A549 (cell line): ENCODE measurements at regions of chr14 and their contacts with region 1.

Region 1: GRCh38 chr14:49867831-49868723 is 15.5 kb upstream of the NEMF start:
- DNase-seq: peak; percentile 90 to 98
- ATAC-seq: peak; percentile 95
- H3K4me3 ChIP-seq: peak overlapping the region; percentile 54
- H3K27ac ChIP-seq: peak overlapping the region; percentile 82 to 93
- H3K4me1 ChIP-seq: peaks cover 25% of the 10 kb centered on the region
- CTCF ChIP-seq: no peak
- EP300 ChIP-seq: no peak
- POLR2A ChIP-seq: peak; percentile 67
- RAD21 ChIP-seq: no peak; a peak in 3 of 5 replicates

Region 2: DNA sequence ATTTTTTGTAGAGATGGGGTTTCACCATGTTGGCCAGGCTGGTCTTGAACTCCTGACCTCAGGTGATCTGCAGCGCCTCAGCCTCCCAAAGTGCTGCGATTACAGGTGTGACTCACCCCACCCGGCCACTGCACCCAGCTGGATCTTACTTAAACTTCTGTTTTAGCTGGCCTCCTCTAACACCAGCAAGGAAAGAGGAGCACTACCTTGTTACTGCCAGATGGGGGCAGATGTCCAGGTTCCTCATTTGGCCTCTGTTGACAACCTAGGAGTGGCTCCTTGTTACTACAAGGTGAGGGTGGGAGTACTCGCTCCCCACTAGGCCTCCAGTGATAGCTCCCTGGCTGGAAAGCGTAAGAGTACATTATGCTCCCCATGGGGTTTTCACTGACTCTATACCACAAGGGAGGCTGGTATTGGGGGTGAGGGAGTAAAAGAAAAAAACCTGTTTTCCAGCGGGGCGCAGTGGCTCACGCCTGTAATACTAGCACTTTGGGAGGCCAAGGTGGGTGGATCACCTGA is 11.7 kb after region 1 on chr14:
- CTCF ChIA-PET with region 1: interaction called, 28 read pairs
- POLR2A ChIA-PET with region 1: interaction called, 4 read pairs
- DNase-seq: peak; percentile 59 to 89
- ATAC-seq: peak; percentile 89 to 95
- H3K4me3 ChIP-seq: no peak overlapping the region
- H3K27ac ChIP-seq: peak overlapping the region; percentile 3 to 38; a peak in 2 of 6 replicates
- H3K4me1 ChIP-seq: 0 out of 3 replicates have a peak, but pooled peaks cover 3% of the 10 kb centered on the region
- CTCF ChIP-seq: peak; percentile 53; the same call in 2 of the 3 replicates
- EP300 ChIP-seq: no peak
- POLR2A ChIP-seq: no peak
- RAD21 ChIP-seq: peak; percentile 53 to 72

Region 3: GRCh38 chr14:49954171-49954631 is 86.1 kb after region 1 on chr14:
- CTCF ChIA-PET with region 1: interaction called, 5 read pairs
- POLR2A ChIA-PET with region 1: interaction called, 10 read pairs
- DNase-seq: peak in 1 of 2 experiments; percentile 40
- ATAC-seq: peak in 1 of 2 experiments; percentile 43; a peak in 2 of 6 replicates
- H3K4me3 ChIP-seq: no peak overlapping the region
- H3K27ac ChIP-seq: peak overlapping the region in 1 of 2 experiments; percentile 55; a peak in 2 of 6 replicates
- H3K4me1 ChIP-seq: peaks cover 58% of the 10 kb centered on the region
- CTCF ChIP-seq: no peak
- EP300 ChIP-seq: no peak
- POLR2A ChIP-seq: no peak
- RAD21 ChIP-seq: no peak

Region 4: GRCh38 chr14:50060871-50061663 is 193.0 kb after region 1 on chr14:
- CTCF ChIA-PET with region 1: interaction called, 29 read pairs
- POLR2A ChIA-PET with region 1: interaction called, 12 read pairs
- DNase-seq: peak; percentile 86 to 89
- ATAC-seq: peak; percentile 88 to 89
- H3K4me3 ChIP-seq: no peak overlapping the region
- H3K27ac ChIP-seq: peak overlapping the region; percentile 90 to 95
- H3K4me1 ChIP-seq: peaks cover 39% of the 10 kb centered on the region
- CTCF ChIP-seq: no peak
- EP300 ChIP-seq: peak in 1 of 2 experiments; percentile 28; a peak in 1 of 5 replicates
- POLR2A ChIP-seq: no peak
- RAD21 ChIP-seq: peak; percentile 8 to 48; a peak in 4 of 5 replicates

Region 5: DNA sequence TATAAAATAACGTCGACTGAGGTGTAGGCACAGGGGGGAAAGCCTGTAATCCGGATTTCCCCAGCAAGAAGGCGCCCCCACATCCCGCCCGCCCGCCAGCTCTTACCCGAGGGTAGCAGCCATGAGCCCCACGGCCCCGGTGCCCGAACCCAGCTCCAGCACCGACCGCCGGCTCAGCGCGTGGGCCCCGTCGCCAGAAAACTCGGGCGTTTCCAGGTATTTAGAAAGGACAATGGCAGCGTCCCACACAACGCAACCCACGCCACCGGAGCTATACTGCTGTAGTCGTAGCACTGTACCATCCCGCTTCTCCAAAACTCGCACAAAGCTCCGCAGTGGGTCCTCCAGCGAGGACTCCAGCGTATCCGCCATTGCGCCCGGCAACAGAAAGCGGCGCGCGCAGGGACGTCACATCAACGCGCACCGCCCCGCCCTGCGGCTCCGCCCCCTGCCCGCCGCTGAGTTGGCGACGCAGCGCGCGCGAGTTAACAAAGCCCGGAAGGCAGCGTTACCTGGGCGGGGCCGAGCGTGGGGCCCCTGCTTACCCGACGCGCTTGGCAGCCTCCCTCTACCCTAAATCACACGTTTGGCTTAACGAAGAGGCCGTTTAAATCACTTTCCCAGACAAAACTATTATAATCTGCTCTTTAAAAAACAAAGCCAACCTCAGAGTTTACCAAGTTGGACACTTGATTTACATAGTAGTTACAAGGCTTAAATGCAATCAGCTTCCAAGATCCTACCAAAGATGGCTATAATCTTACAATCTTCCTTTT is 248.3 kb after region 1 on chr14 and contains the start of gene VCPKMT:
- CTCF ChIA-PET with region 1: interaction called, 17 read pairs
- POLR2A ChIA-PET with region 1: interaction called, 19 read pairs
- DNase-seq: peak; percentile 76 to 91
- ATAC-seq: peak; percentile 99
- H3K4me3 ChIP-seq: peak within 1 kb of the TSS; percentile 71
- H3K27ac ChIP-seq: peak within 1 kb of the TSS; percentile 73 to 93
- H3K4me1 ChIP-seq: peaks cover 16% of the 10 kb centered on the region
- CTCF ChIP-seq: no peak
- EP300 ChIP-seq: no peak
- POLR2A ChIP-seq: peak; percentile 91
- RAD21 ChIP-seq: peak in 1 of 2 experiments; percentile 18; a peak in 1 of 5 replicates
- polyA plus RNA-seq, gene VCPKMT: 9.8 and 12.2 TPM in 2 replicates

Region 6: GRCh38 chr14:50432131-50432530 is 564.1 kb after region 1 on chr14:
- CTCF ChIA-PET with region 1: no interaction called
- POLR2A ChIA-PET with region 1: no interaction called
- DNase-seq: no peak
- ATAC-seq: no peak
- H3K4me3 ChIP-seq: no peak overlapping the region
- H3K27ac ChIP-seq: no peak overlapping the region
- H3K4me1 ChIP-seq: no peaks in the 10 kb centered on the region; the same call in 2 of the 3 replicates
- CTCF ChIP-seq: no peak
- EP300 ChIP-seq: no peak
- POLR2A ChIP-seq: no peak
- RAD21 ChIP-seq: no peak